ENCODE measurements at regions of chr9 and their contacts with region 1.

Region 1: GRCh38 chr9:17556255-17556654 is 22.6 kb upstream of the SH3GL2 start:
- DNase-seq: no peak
- H3K4me3 ChIP-seq: no peak overlapping the region
- H3K27ac ChIP-seq: no peak overlapping the region
- H3K4me1 ChIP-seq: no peaks in the 10 kb centered on the region
- H3K27me3 ChIP-seq: no peaks in the 10 kb centered on the region
- CTCF ChIP-seq: no peak
- EP300 ChIP-seq: no peak
- POLR2A ChIP-seq: no peak

Region 2: GRCh38 chr9:17519761-17520160 is 36.5 kb before region 1 on chr9:
- in situ Hi-C with region 1: no loop called
- intact Hi-C with region 1: no loop called
- DNase-seq: no peak
- H3K4me3 ChIP-seq: no peak overlapping the region
- H3K27ac ChIP-seq: no peak overlapping the region
- H3K4me1 ChIP-seq: peaks cover 0 to 9% (median 0%) of the 10 kb centered on the region in 4 donors
- H3K27me3 ChIP-seq: no peaks in the 10 kb centered on the region
- CTCF ChIP-seq: no peak
- EP300 ChIP-seq: no peak
- POLR2A ChIP-seq: no peak

Region 3: DNA sequence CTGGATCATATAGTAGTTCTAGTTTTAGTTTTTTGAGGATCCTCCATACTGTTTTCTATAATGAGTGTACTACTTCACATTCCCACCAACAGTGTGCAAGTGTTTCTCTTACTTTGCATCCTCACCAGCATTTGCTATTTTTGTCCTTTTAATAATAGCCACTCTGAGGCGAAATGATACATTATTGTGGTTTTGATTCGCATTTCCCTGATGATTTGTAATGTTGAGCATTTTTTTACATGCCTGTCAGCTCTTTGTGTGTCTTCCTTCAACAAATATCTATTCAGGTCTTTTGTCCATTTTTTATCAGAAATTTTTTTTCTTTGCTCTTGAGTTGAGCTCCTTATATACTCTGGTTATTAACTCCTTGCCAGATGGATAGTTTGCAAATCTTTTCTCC is 1031.7 kb after region 1 on chr9:
- in situ Hi-C with region 1: no loop called
- intact Hi-C with region 1: loop called (anchors 5 kb)
- DNase-seq: no peak
- H3K4me3 ChIP-seq: no peak overlapping the region
- H3K27ac ChIP-seq: no peak overlapping the region
- H3K4me1 ChIP-seq: no peaks in the 10 kb centered on the region
- H3K27me3 ChIP-seq: no peaks in the 10 kb centered on the region
- CTCF ChIP-seq: no peak
- EP300 ChIP-seq: no peak
- POLR2A ChIP-seq: no peak